GM12878 (cell line): ENCODE measurements at regions of chr3 and their contacts with region 1.

Region 1: GRCh38 chr3:64533617-64534317 is 154.0 kb downstream of the ADAMTS9 start:
- DNase-seq: peak; percentile 7
- ATAC-seq: peak; percentile 99
- H3K4me3 ChIP-seq: no peak overlapping the region
- H3K27ac ChIP-seq: no peak overlapping the region
- H3K4me1 ChIP-seq: no peaks in the 10 kb centered on the region
- H3K27me3 ChIP-seq: 0 out of 4 replicates have a peak, but pooled peaks cover 0 to 2% of the 10 kb centered on the region in 2 experiments
- CTCF ChIP-seq: peak; percentile 84 to 90 (median 84)
- EP300 ChIP-seq: no peak
- POLR2A ChIP-seq: no peak
- RAD21 ChIP-seq: peak; percentile 88

Region 2: DNA sequence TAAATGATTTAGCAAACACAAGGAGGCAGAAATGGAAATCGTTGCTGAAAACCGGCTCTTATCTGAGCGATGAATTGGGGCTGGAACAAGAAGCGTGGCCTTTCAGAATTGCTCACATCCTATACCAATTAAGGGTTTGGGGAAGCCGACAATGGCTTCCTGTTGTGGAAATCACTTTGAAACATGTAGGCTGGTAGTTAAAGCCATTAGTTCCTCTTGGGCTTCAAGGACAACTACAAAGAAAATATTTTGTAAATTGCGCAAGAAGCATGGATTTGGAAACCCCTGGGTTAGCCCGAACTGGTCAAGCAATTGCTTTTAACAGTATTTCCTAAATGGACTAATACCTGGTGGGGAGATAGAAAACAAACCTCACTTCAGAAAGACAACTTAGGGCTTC is 28.3 kb before region 1 on chr3:
- CTCF ChIA-PET with region 1: interaction called, 3 read pairs
- POLR2A ChIA-PET with region 1: no interaction called
- RAD21 ChIA-PET with region 1: no interaction called
- SMC1A ChIA-PET with region 1: interaction called, 10 read pairs
- in situ Hi-C with region 1: no loop called
- intact Hi-C with region 1: no loop called
- DNase-seq: no peak
- ATAC-seq: no peak
- H3K4me3 ChIP-seq: no peak overlapping the region
- H3K27ac ChIP-seq: no peak overlapping the region
- H3K4me1 ChIP-seq: no peaks in the 10 kb centered on the region
- H3K27me3 ChIP-seq: no peaks in the 10 kb centered on the region
- CTCF ChIP-seq: no peak
- EP300 ChIP-seq: no peak
- POLR2A ChIP-seq: no peak
- RAD21 ChIP-seq: no peak

Region 3: DNA sequence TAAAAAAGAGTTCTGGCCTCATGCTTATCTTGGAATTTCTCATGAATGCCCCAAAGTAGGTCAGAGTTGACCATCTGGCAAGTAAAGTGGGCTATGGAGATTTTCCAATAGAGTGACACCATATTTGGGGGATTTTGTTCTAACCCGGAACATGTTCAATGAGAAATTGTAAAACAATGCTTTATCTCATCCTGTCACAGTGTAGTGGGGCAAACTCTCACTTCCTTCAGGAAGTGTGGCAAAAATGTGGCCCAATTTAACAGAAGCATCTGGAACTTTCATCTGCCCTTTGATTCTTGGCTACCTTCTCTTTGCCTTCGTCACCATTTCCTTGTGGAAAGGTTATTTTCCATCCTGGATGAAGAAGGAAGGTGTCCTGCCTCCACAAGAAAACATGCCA is 83.2 kb after region 1 on chr3:
- CTCF ChIA-PET with region 1: no interaction called
- POLR2A ChIA-PET with region 1: no interaction called
- RAD21 ChIA-PET with region 1: no interaction called
- SMC1A ChIA-PET with region 1: no interaction called
- in situ Hi-C with region 1: no loop called
- intact Hi-C with region 1: no loop called
- DNase-seq: no peak
- ATAC-seq: no peak
- H3K4me3 ChIP-seq: no peak overlapping the region
- H3K27ac ChIP-seq: no peak overlapping the region
- H3K4me1 ChIP-seq: no peaks in the 10 kb centered on the region
- H3K27me3 ChIP-seq: no peaks in the 10 kb centered on the region
- CTCF ChIP-seq: no peak
- EP300 ChIP-seq: no peak
- POLR2A ChIP-seq: no peak
- RAD21 ChIP-seq: no peak

Region 4: GRCh38 chr3:64696896-64697295 is 163.1 kb after region 1 on chr3:
- CTCF ChIA-PET with region 1: no interaction called
- POLR2A ChIA-PET with region 1: no interaction called
- RAD21 ChIA-PET with region 1: no interaction called
- SMC1A ChIA-PET with region 1: no interaction called
- in situ Hi-C with region 1: no loop called
- intact Hi-C with region 1: no loop called
- DNase-seq: no peak
- ATAC-seq: no peak
- H3K4me3 ChIP-seq: no peak overlapping the region
- H3K27ac ChIP-seq: no peak overlapping the region
- H3K4me1 ChIP-seq: no peaks in the 10 kb centered on the region
- H3K27me3 ChIP-seq: no peaks in the 10 kb centered on the region
- CTCF ChIP-seq: no peak
- EP300 ChIP-seq: no peak
- POLR2A ChIP-seq: no peak
- RAD21 ChIP-seq: no peak

Region 5: GRCh38 chr3:65170390-65171042 is 636.7 kb after region 1 on chr3:
- CTCF ChIA-PET with region 1: interaction called, 7 read pairs
- POLR2A ChIA-PET with region 1: no interaction called
- RAD21 ChIA-PET with region 1: interaction called, 4 read pairs
- SMC1A ChIA-PET with region 1: interaction called, 3 read pairs
- in situ Hi-C with region 1: no loop called
- intact Hi-C with region 1: loop called (anchors 5 kb)
- DNase-seq: no peak
- ATAC-seq: no peak
- H3K4me3 ChIP-seq: no peak overlapping the region
- H3K27ac ChIP-seq: no peak overlapping the region
- H3K4me1 ChIP-seq: no peaks in the 10 kb centered on the region
- H3K27me3 ChIP-seq: no peaks in the 10 kb centered on the region
- CTCF ChIP-seq: no peak
- EP300 ChIP-seq: no peak
- POLR2A ChIP-seq: no peak
- RAD21 ChIP-seq: no peak

Region 6: GRCh38 chr3:65439641-65440284 is 906.0 kb after region 1 on chr3:
- CTCF ChIA-PET with region 1: interaction called, 3 read pairs
- POLR2A ChIA-PET with region 1: no interaction called
- RAD21 ChIA-PET with region 1: no interaction called
- SMC1A ChIA-PET with region 1: interaction called, 7 read pairs
- in situ Hi-C with region 1: no loop called
- intact Hi-C with region 1: loop called (anchors 5 kb)
- DNase-seq: no peak
- ATAC-seq: peak; percentile 76
- H3K4me3 ChIP-seq: no peak overlapping the region
- H3K27ac ChIP-seq: no peak overlapping the region
- H3K4me1 ChIP-seq: no peaks in the 10 kb centered on the region
- H3K27me3 ChIP-seq: no peaks in the 10 kb centered on the region
- CTCF ChIP-seq: peak in 1 of 3 experiments; percentile 21; a peak in 1 of 6 replicates
- EP300 ChIP-seq: no peak
- POLR2A ChIP-seq: no peak
- RAD21 ChIP-seq: 0 out of 2 replicates have a peak, but pooled peaks have one; percentile 14

Region 7: GRCh38 chr3:65732051-65732935 is 1198.5 kb after region 1 on chr3:
- CTCF ChIA-PET with region 1: interaction called, 20 read pairs
- POLR2A ChIA-PET with region 1: no interaction called
- RAD21 ChIA-PET with region 1: no interaction called
- SMC1A ChIA-PET with region 1: interaction called, 3 read pairs
- in situ Hi-C with region 1: loop called (anchors 10 kb)
- intact Hi-C with region 1: loop called (anchors 5 kb)
- DNase-seq: peak; percentile 3
- ATAC-seq: peak; percentile 93
- H3K4me3 ChIP-seq: no peak overlapping the region
- H3K27ac ChIP-seq: no peak overlapping the region
- H3K4me1 ChIP-seq: no peaks in the 10 kb centered on the region
- H3K27me3 ChIP-seq: no peaks in the 10 kb centered on the region
- CTCF ChIP-seq: peak; percentile 67 to 83 (median 82)
- EP300 ChIP-seq: no peak
- POLR2A ChIP-seq: no peak
- RAD21 ChIP-seq: peak; percentile 64